Caco-2 (cell line): ENCODE measurements at regions of chr1 and their contacts with region 1.

Region 1: GRCh38 chr1:219837274-219837993 is 90.9 kb downstream of the SLC30A10 start:
- DNase-seq: peak in 1 of 2 experiments; percentile 63
- H3K4me3 ChIP-seq: no peak overlapping the region
- H3K4me3 Mint-ChIP-seq: no peak overlapping the region
- H3K27ac Mint-ChIP-seq: no peak overlapping the region
- H3K4me1 ChIP-seq: peaks cover 3% of the 10 kb centered on the region; the same call in 1 of the 2 replicates
- H3K4me1 Mint-ChIP-seq: peaks cover 6% of the 10 kb centered on the region
- H3K27me3 ChIP-seq: no peaks in the 10 kb centered on the region
- H3K27me3 Mint-ChIP-seq: peaks cover 15% of the 10 kb centered on the region
- CTCF ChIP-seq: peak; percentile 54 to 65

Region 2: GRCh38 chr1:219798283-219799030 is 39.0 kb before region 1 on chr1:
- CTCF ChIA-PET with region 1: no interaction called
- POLR2A ChIA-PET with region 1: no interaction called
- intact Hi-C with region 1: no loop called
- DNase-seq: no peak
- H3K4me3 ChIP-seq: no peak overlapping the region
- H3K4me3 Mint-ChIP-seq: no peak overlapping the region
- H3K27ac Mint-ChIP-seq: no peak overlapping the region
- H3K4me1 ChIP-seq: no peaks in the 10 kb centered on the region
- H3K4me1 Mint-ChIP-seq: no peaks in the 10 kb centered on the region
- H3K27me3 ChIP-seq: no peaks in the 10 kb centered on the region; the same call in 1 of the 2 replicates
- H3K27me3 Mint-ChIP-seq: peaks cover 32% of the 10 kb centered on the region
- CTCF ChIP-seq: no peak

Region 3: GRCh38 chr1:219938706-219939105 is 101.3 kb after region 1 on chr1:
- CTCF ChIA-PET with region 1: no interaction called
- POLR2A ChIA-PET with region 1: no interaction called
- intact Hi-C with region 1: no loop called
- DNase-seq: no peak
- H3K4me3 ChIP-seq: no peak overlapping the region
- H3K4me3 Mint-ChIP-seq: no peak overlapping the region
- H3K27ac Mint-ChIP-seq: no peak overlapping the region
- H3K4me1 ChIP-seq: no peaks in the 10 kb centered on the region
- H3K4me1 Mint-ChIP-seq: no peaks in the 10 kb centered on the region
- H3K27me3 ChIP-seq: no peaks in the 10 kb centered on the region; the same call in 1 of the 2 replicates
- H3K27me3 Mint-ChIP-seq: peaks cover 5% of the 10 kb centered on the region
- CTCF ChIP-seq: no peak

Region 4: GRCh38 chr1:219973213-219973612 is 135.8 kb after region 1 on chr1:
- CTCF ChIA-PET with region 1: no interaction called
- POLR2A ChIA-PET with region 1: no interaction called
- intact Hi-C with region 1: loop called (anchors 2 kb)
- DNase-seq: no peak
- H3K4me3 ChIP-seq: no peak overlapping the region
- H3K4me3 Mint-ChIP-seq: no peak overlapping the region
- H3K27ac Mint-ChIP-seq: no peak overlapping the region
- H3K4me1 ChIP-seq: no peaks in the 10 kb centered on the region
- H3K4me1 Mint-ChIP-seq: no peaks in the 10 kb centered on the region
- H3K27me3 ChIP-seq: no peaks in the 10 kb centered on the region
- H3K27me3 Mint-ChIP-seq: no peaks in the 10 kb centered on the region
- CTCF ChIP-seq: no peak

Region 5: DNA sequence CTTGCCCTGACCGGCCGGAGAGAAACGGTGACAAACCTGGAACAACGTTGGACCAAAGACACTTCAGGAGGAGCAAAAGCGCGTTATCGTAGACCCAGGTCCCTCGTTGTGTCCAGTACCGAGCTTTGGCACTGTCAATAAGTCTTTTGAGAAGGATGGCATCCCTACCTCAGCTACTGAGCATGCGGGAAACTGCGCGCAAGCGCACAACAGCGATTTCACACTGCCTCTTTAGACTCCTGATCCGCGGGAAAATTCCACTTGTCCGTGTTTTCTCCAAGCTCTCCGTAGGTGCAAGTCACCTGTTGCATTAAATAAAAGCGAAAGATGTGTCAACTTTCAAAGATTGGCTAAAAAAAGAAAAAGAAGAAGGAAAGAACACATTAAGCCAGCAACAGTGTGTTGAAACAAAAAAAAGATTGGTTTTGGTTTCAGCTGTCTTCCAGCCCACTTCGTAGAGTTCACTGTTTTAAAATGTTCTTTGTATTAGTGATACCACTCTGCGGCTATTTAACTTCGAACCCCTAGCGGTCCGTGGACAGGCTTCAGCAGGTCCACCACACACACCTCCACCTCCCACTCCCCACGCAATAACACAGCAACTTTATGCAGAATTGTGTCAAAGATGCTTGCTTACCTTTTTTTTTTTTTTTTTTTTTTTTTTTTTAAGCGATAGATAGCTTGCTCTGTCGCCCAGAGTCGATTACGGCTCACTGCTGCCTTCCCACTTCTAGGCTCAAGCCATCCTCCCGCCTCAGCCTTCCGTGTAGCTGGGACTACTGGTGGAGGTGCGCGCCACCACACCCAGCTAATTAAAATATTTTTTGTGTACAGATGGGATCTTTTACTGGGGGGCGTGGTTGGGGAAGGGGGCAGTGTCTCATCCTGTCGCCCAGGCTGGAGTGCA is 252.5 kb after region 1 on chr1 and contains the start of gene BPNT1:
- CTCF ChIA-PET with region 1: no interaction called
- POLR2A ChIA-PET with region 1: no interaction called
- intact Hi-C with region 1: no loop called
- DNase-seq: peak; percentile 96 to 97
- H3K4me3 ChIP-seq: peak within 1 kb of the TSS; percentile 69
- H3K4me3 Mint-ChIP-seq: peak within 1 kb of the TSS; percentile 100
- H3K27ac Mint-ChIP-seq: peak within 1 kb of the TSS; percentile 94
- H3K4me1 ChIP-seq: 0 out of 2 replicates have a peak, but pooled peaks cover 5% of the 10 kb centered on the region
- H3K4me1 Mint-ChIP-seq: no peaks in the 10 kb centered on the region
- H3K27me3 ChIP-seq: no peaks in the 10 kb centered on the region
- H3K27me3 Mint-ChIP-seq: no peaks in the 10 kb centered on the region
- CTCF ChIP-seq: no peak
- total RNA-seq, gene BPNT1: 25.0 and 29.4 TPM in 2 replicates